ENCODE measurements at regions of chr17 and their contacts with region 1.

Region 1: DNA sequence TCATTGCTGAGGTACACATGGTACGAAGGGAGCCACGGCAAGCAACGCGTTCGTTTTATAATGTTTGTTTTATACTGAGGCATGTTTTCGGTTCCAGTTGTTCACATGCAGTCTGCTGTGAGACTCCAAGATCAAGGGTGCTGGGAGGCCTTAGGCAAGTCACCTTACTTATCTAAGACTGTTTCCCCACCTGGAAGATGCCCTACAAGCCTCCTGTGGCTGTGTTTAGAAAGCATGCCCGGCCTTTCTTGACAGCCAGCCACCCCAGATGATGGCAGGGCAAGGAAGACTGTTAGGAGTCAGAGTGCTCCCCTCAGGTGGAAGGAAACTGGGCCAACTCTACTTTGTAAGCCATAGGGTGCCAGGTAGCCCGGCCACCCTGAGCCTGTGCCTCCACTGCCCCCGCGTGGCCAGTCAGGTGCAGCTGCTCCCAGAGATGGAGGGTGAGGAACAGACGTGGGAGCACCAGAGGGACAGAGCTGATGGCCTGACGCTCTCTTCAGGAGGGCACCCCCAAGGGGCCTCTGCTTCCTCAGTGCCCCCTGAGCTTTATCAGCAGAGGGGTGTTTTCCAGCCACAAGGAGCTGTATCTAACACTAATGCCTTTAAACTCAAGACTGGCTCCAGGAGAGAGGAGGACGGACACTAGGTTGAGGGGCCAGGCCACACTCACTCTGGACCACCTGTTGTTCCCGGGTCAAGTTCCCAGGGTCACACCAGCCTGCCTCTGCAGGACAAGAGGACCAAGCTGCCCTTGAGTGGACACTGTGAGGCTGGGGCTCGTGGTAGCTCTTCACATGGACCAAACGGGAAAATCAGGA is 5.4 kb downstream of the NAT9 start:
- DNase-seq: peak; percentile 80
- H3K4me3 Mint-ChIP-seq: no peak overlapping the region
- H3K27ac Mint-ChIP-seq: peak overlapping the region; percentile 19
- H3K4me1 Mint-ChIP-seq: peaks cover 25% of the 10 kb centered on the region
- H3K27me3 Mint-ChIP-seq: no peaks in the 10 kb centered on the region
- CTCF ChIP-seq: peak; percentile 93

Region 2: GRCh38 chr17:74748529-74749365 is 22.0 kb before region 1 on chr17 and contains the start of gene NHERF1:
- CTCF ChIA-PET with region 1: interaction called, 74 read pairs
- POLR2A ChIA-PET with region 1: interaction called, 22 read pairs
- intact Hi-C with region 1: loop called (anchors 1 kb)
- DNase-seq: peak; percentile 94
- H3K4me3 Mint-ChIP-seq: peak within 1 kb of the TSS; percentile 88
- H3K27ac Mint-ChIP-seq: peak within 1 kb of the TSS; percentile 57
- H3K4me1 Mint-ChIP-seq: peaks cover 34% of the 10 kb centered on the region
- H3K27me3 Mint-ChIP-seq: no peaks in the 10 kb centered on the region
- CTCF ChIP-seq: no peak
- total RNA-seq, gene NHERF1: 23.9 and 25.3 TPM in 2 replicates

Measured in MCF 10A (cell line).